B cell (primary cell): ENCODE measurements at regions of chr15 and their contacts with region 1.

Region 1: DNA sequence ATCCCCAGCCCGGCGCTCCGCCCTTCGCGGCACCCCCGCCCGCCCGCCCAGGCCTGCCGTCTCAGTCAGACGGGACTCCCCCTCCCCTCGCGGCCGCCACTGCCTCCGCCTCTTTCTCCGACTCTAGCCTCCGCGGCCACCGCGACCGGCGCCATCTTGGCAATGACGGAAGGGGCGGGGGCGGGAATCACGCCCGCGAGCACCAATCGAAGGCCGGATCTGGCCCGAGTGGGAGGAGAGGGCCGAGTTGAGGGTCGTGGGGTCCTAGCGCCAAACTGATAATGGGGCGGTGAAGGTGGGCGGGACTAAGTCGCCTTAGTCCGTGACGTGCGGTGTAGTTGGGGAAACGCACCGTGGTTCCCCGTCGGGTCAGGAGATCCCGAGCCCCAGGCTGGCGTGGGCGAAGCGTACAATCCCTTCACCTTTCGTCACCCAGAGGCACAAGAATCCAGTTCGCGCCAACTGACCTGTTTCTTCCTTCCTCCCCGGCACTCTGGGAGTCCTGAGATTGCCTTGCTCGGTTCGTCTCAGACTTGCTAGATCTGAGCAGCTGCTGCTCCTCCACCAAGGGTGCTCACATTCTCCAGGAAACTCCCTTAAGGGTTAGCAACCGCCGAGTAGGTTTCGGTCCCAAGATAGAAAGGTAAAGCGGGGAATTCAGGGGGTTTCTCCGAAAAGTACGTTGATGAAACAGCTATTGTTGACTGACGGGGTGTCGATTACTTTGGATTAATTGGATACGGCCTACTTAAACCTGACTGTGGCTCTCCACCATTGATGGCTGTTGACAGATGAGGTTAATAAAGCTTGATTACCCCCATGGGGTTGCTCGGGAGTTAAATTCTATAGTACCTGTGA is at the start of gene DENND4A:
- DNase-seq: peak; percentile 100
- ATAC-seq: peak; percentile 83
- H3K4me3 ChIP-seq: peak within 1 kb of the TSS; percentile 82 to 99 (median 95)
- H3K4me3 Mint-ChIP-seq: peak within 1 kb of the TSS; percentile 93
- H3K27ac ChIP-seq: peak within 1 kb of the TSS; percentile 99 to 100
- H3K27ac Mint-ChIP-seq: peak within 1 kb of the TSS; percentile 97
- H3K4me1 ChIP-seq: peaks cover 33 to 44% of the 10 kb centered on the region in 2 donors
- H3K4me1 Mint-ChIP-seq: peaks cover 50% of the 10 kb centered on the region
- H3K27me3 ChIP-seq: no peaks in the 10 kb centered on the region
- H3K27me3 Mint-ChIP-seq: no peaks in the 10 kb centered on the region
- CTCF ChIP-seq: no peak
- total RNA-seq, gene DENND4A: 103 and 114 TPM in 2 replicates

Region 2: GRCh38 chr15:65712415-65712814 is 79.9 kb before region 1 on chr15:
- CTCF ChIA-PET with region 1: no interaction called
- POLR2A ChIA-PET with region 1: no interaction called
- intact Hi-C with region 1: loop called (anchors 5 kb)
- DNase-seq: no peak
- ATAC-seq: no peak
- H3K4me3 ChIP-seq: no peak overlapping the region
- H3K4me3 Mint-ChIP-seq: no peak overlapping the region
- H3K27ac ChIP-seq: peak overlapping the region in 1 of 2 donors; percentile 12
- H3K27ac Mint-ChIP-seq: no peak overlapping the region
- H3K4me1 ChIP-seq: no peaks in the 10 kb centered on the region
- H3K4me1 Mint-ChIP-seq: peaks cover 2% of the 10 kb centered on the region
- H3K27me3 ChIP-seq: no peaks in the 10 kb centered on the region
- H3K27me3 Mint-ChIP-seq: no peaks in the 10 kb centered on the region
- CTCF ChIP-seq: no peak

Region 3: GRCh38 chr15:65752151-65752700 is 40.1 kb before region 1 on chr15:
- CTCF ChIA-PET with region 1: interaction called, 4 read pairs
- POLR2A ChIA-PET with region 1: no interaction called
- intact Hi-C with region 1: loop called (anchors 5 kb)
- DNase-seq: no peak
- ATAC-seq: no peak
- H3K4me3 ChIP-seq: no peak overlapping the region
- H3K4me3 Mint-ChIP-seq: no peak overlapping the region
- H3K27ac ChIP-seq: no peak overlapping the region
- H3K27ac Mint-ChIP-seq: peak overlapping the region; percentile 12
- H3K4me1 ChIP-seq: no peaks in the 10 kb centered on the region
- H3K4me1 Mint-ChIP-seq: peaks cover 23% of the 10 kb centered on the region
- H3K27me3 ChIP-seq: no peaks in the 10 kb centered on the region
- H3K27me3 Mint-ChIP-seq: no peaks in the 10 kb centered on the region
- CTCF ChIP-seq: no peak

Region 4: GRCh38 chr15:65773386-65774111 is 18.8 kb before region 1 on chr15:
- CTCF ChIA-PET with region 1: interaction called, 5 read pairs
- POLR2A ChIA-PET with region 1: interaction called, 5 read pairs
- intact Hi-C with region 1: loop called (anchors 1 kb)
- DNase-seq: peak; percentile 83
- ATAC-seq: peak; percentile 62
- H3K4me3 ChIP-seq: peak overlapping the region in 4 of 5 experiments; percentile 15 to 29 (median 18)
- H3K4me3 Mint-ChIP-seq: peak overlapping the region; percentile 80
- H3K27ac ChIP-seq: peak overlapping the region; percentile 90 to 93
- H3K27ac Mint-ChIP-seq: peak overlapping the region; percentile 92
- H3K4me1 ChIP-seq: peaks cover 78 to 88% of the 10 kb centered on the region in 2 donors
- H3K4me1 Mint-ChIP-seq: peaks cover 77% of the 10 kb centered on the region
- H3K27me3 ChIP-seq: no peaks in the 10 kb centered on the region
- H3K27me3 Mint-ChIP-seq: no peaks in the 10 kb centered on the region
- CTCF ChIP-seq: no peak

Region 5: GRCh38 chr15:65818927-65819562 is 26.7 kb after region 1 on chr15:
- CTCF ChIA-PET with region 1: interaction called, 24 read pairs
- POLR2A ChIA-PET with region 1: interaction called, 23 read pairs
- intact Hi-C with region 1: loop called (anchors 1 kb)
- DNase-seq: peak; percentile 91
- ATAC-seq: peak; percentile 78
- H3K4me3 ChIP-seq: peak overlapping the region in 2 of 5 experiments; percentile 21 to 40
- H3K4me3 Mint-ChIP-seq: peak overlapping the region; percentile 70
- H3K27ac ChIP-seq: peak overlapping the region; percentile 91 to 94
- H3K27ac Mint-ChIP-seq: peak overlapping the region; percentile 96
- H3K4me1 ChIP-seq: peaks cover 66 to 77% of the 10 kb centered on the region in 2 donors
- H3K4me1 Mint-ChIP-seq: peaks cover 74% of the 10 kb centered on the region
- H3K27me3 ChIP-seq: no peaks in the 10 kb centered on the region
- H3K27me3 Mint-ChIP-seq: no peaks in the 10 kb centered on the region
- CTCF ChIP-seq: no peak

Region 6: GRCh38 chr15:65824031-65824743 is 31.8 kb after region 1 on chr15:
- CTCF ChIA-PET with region 1: interaction called, 26 read pairs
- POLR2A ChIA-PET with region 1: interaction called, 23 read pairs
- intact Hi-C with region 1: loop called (anchors 1 kb)
- DNase-seq: peak; percentile 57
- ATAC-seq: peak; percentile 31
- H3K4me3 ChIP-seq: no peak overlapping the region
- H3K4me3 Mint-ChIP-seq: no peak overlapping the region
- H3K27ac ChIP-seq: no peak overlapping the region
- H3K27ac Mint-ChIP-seq: peak overlapping the region; percentile 56
- H3K4me1 ChIP-seq: peaks cover 72 to 77% of the 10 kb centered on the region in 2 donors
- H3K4me1 Mint-ChIP-seq: peaks cover 66% of the 10 kb centered on the region
- H3K27me3 ChIP-seq: no peaks in the 10 kb centered on the region
- H3K27me3 Mint-ChIP-seq: no peaks in the 10 kb centered on the region
- CTCF ChIP-seq: peak; percentile 46

Region 7: GRCh38 chr15:65832549-65833364 is 40.4 kb after region 1 on chr15:
- CTCF ChIA-PET with region 1: interaction called, 26 read pairs
- POLR2A ChIA-PET with region 1: interaction called, 9 read pairs
- intact Hi-C with region 1: loop called (anchors 1 kb)
- DNase-seq: peak; percentile 68
- ATAC-seq: peak; percentile 60
- H3K4me3 ChIP-seq: peak overlapping the region in 3 of 5 experiments; percentile 21 to 52 (median 25)
- H3K4me3 Mint-ChIP-seq: peak overlapping the region; percentile 80
- H3K27ac ChIP-seq: peak overlapping the region; percentile 70 to 79
- H3K27ac Mint-ChIP-seq: peak overlapping the region; percentile 96
- H3K4me1 ChIP-seq: peaks cover 37 to 40% of the 10 kb centered on the region in 2 donors
- H3K4me1 Mint-ChIP-seq: peaks cover 56% of the 10 kb centered on the region
- H3K27me3 ChIP-seq: no peaks in the 10 kb centered on the region
- H3K27me3 Mint-ChIP-seq: no peaks in the 10 kb centered on the region
- CTCF ChIP-seq: no peak